ENCODE measurements at regions of chr17 and their contacts with region 1.

Region 1: GRCh38 chr17:74457146-74457819 is 9.2 kb upstream of the CD300A start:
- DNase-seq: peak; percentile 76
- H3K4me3 Mint-ChIP-seq: no peak overlapping the region
- H3K27ac Mint-ChIP-seq: peak overlapping the region; percentile 73
- H3K4me1 Mint-ChIP-seq: peaks cover 47% of the 10 kb centered on the region
- H3K27me3 Mint-ChIP-seq: peaks cover 77% of the 10 kb centered on the region

Region 2: GRCh38 chr17:74271901-74272561 is 185.3 kb before region 1 on chr17:
- CTCF ChIA-PET with region 1: no interaction called
- DNase-seq: no peak
- H3K4me3 Mint-ChIP-seq: no peak overlapping the region
- H3K27ac Mint-ChIP-seq: no peak overlapping the region
- H3K4me1 Mint-ChIP-seq: peaks cover 54% of the 10 kb centered on the region
- H3K27me3 Mint-ChIP-seq: peaks cover 82% of the 10 kb centered on the region

Region 3: GRCh38 chr17:74288785-74289184 is 168.5 kb before region 1 on chr17:
- CTCF ChIA-PET with region 1: no interaction called
- DNase-seq: no peak
- H3K4me3 Mint-ChIP-seq: no peak overlapping the region
- H3K27ac Mint-ChIP-seq: peak overlapping the region; percentile 37
- H3K4me1 Mint-ChIP-seq: peaks cover 44% of the 10 kb centered on the region
- H3K27me3 Mint-ChIP-seq: peaks cover 22% of the 10 kb centered on the region

Region 4: GRCh38 chr17:74403512-74404137 is 53.7 kb before region 1 on chr17:
- CTCF ChIA-PET with region 1: no interaction called
- DNase-seq: no peak
- H3K4me3 Mint-ChIP-seq: no peak overlapping the region
- H3K27ac Mint-ChIP-seq: no peak overlapping the region
- H3K4me1 Mint-ChIP-seq: no peaks in the 10 kb centered on the region
- H3K27me3 Mint-ChIP-seq: peaks cover 31% of the 10 kb centered on the region

Region 5: GRCh38 chr17:74467221-74467951 is 10.1 kb after region 1 on chr17:
- CTCF ChIA-PET with region 1: interaction called, 13 read pairs
- DNase-seq: no peak
- H3K4me3 Mint-ChIP-seq: no peak overlapping the region
- H3K27ac Mint-ChIP-seq: peak overlapping the region; percentile 89
- H3K4me1 Mint-ChIP-seq: peaks cover 29% of the 10 kb centered on the region
- H3K27me3 Mint-ChIP-seq: peaks cover 19% of the 10 kb centered on the region

Region 6: DNA sequence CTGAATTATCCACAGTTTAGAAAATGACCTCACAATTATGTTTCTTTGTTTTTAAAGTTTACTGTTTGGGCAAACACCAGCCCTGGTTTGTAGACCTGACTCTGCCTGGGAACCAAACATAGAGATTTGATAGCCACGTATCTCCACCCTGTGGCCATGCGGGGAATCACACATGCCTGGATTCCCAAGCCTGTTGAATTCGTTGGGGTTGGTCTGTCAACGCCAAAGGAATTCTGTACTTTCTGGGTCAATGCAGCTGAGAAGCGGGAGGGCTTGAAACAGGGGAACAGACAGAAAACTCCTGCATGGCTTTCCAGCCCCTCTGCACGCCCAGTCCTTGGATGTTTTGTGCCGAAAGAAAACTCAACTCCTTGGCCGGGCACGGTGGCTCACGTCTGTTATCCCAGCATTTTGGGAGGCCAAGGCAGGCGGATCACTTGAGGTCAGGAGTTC is 36.1 kb after region 1 on chr17:
- CTCF ChIA-PET with region 1: interaction called, 22 read pairs
- DNase-seq: peak; percentile 80
- H3K4me3 Mint-ChIP-seq: no peak overlapping the region
- H3K27ac Mint-ChIP-seq: no peak overlapping the region
- H3K4me1 Mint-ChIP-seq: peaks cover 8% of the 10 kb centered on the region
- H3K27me3 Mint-ChIP-seq: peaks cover 52% of the 10 kb centered on the region

Region 7: DNA sequence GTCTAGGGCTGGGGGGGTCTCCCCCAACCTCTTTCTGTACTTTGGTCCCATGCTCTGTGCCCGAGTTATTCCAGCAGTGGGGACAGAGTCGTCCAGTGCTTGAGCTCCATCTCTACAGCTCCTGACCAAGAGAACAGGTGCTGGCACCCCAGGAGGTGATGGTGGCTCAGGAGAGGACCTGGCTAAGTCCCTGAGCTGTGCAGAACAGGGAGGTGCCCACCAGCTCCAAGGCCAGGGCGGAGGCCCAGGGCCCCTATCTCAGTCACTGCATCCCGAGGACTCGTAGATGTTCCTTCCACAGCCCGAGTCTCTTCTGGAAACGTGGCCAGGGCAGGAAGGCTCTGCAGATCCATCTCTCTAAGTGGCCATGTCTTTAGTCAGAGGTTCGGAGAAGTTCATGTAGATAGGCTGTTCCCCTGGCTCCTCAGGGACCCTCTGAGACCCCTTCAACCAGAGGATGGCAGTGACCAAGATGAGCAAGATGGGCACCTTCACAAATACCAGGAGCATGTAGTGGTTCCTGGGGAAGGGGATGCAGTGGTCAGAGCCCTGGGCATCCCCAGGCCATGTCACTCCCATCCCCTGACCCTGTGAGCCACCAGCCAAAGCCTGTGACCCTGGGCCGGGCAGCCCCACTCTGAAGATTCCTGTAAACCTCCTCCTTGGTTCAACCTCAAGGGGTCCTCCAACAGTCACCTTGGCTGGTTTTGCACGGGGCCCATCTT is 65.3 kb after region 1 on chr17:
- CTCF ChIA-PET with region 1: no interaction called
- DNase-seq: no peak
- H3K4me3 Mint-ChIP-seq: no peak overlapping the region
- H3K27ac Mint-ChIP-seq: no peak overlapping the region
- H3K4me1 Mint-ChIP-seq: peaks cover 10% of the 10 kb centered on the region
- H3K27me3 Mint-ChIP-seq: peaks cover 63% of the 10 kb centered on the region

Measured in activated naive CD4-positive, alpha-beta T cell treated with anti-CD3 and anti-CD28 coated beads, Interleukin-2, amount 10 ng/mL, durations not matched to agents 7 days and 5 days (primary cell).